A673 (cell line): ENCODE measurements at regions of chr16 and their contacts with region 1.

Region 1: GRCh38 chr16:89490387-89491237 is at the start of gene ANKRD11:
- DNase-seq: peak; percentile 100
- H3K4me3 ChIP-seq: peak within 1 kb of the TSS; percentile 86
- H3K27ac ChIP-seq: peak within 1 kb of the TSS; percentile 96
- H3K4me1 ChIP-seq: peaks cover 30% of the 10 kb centered on the region
- H3K27me3 ChIP-seq: no peaks in the 10 kb centered on the region
- CTCF ChIP-seq: no peak
- total RNA-seq, gene ANKRD11: 217 and 248 TPM in 2 replicates

Region 2: DNA sequence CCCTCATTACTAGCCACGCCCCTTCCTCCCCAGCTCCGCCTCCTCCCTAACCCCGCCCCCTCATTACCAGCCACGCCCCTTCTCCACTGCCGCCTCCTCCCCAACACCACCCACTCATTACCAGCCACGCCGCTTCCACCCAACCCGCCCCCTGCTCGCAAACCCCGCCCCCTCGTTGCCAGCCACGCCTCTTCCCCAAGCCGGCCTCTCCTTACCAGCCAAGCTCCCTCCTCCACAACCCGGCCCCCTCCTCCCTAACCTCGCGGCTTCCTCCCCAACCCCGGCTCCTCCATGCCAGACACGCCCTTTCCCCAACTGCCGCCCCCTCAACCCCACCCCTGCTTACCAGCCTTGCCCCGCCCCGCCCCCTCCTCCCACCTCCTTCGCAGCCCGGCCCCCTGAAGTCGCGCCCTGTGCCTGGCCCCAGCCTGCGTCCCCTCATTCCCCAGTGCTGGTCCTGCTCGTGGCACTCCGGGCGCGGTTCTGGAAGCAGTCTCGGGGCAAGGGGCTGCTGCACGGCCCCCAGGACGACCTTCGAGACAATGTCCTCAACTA is 297.5 kb before region 1 on chr16:
- CTCF ChIA-PET with region 1: no interaction called
- POLR2A ChIA-PET with region 1: no interaction called
- intact Hi-C with region 1: loop called (anchors 5 kb)
- DNase-seq: peak; percentile 90
- H3K4me3 ChIP-seq: no peak overlapping the region
- H3K27ac ChIP-seq: no peak overlapping the region
- H3K4me1 ChIP-seq: peaks cover 7% of the 10 kb centered on the region
- H3K27me3 ChIP-seq: no peaks in the 10 kb centered on the region
- CTCF ChIP-seq: no peak

Region 3: GRCh38 chr16:89230255-89230654 is 260.4 kb before region 1 on chr16:
- CTCF ChIA-PET with region 1: no interaction called
- POLR2A ChIA-PET with region 1: no interaction called
- intact Hi-C with region 1: no loop called
- DNase-seq: no peak
- H3K4me3 ChIP-seq: no peak overlapping the region
- H3K27ac ChIP-seq: no peak overlapping the region
- H3K4me1 ChIP-seq: no peaks in the 10 kb centered on the region
- H3K27me3 ChIP-seq: no peaks in the 10 kb centered on the region
- CTCF ChIP-seq: no peak

Region 4: DNA sequence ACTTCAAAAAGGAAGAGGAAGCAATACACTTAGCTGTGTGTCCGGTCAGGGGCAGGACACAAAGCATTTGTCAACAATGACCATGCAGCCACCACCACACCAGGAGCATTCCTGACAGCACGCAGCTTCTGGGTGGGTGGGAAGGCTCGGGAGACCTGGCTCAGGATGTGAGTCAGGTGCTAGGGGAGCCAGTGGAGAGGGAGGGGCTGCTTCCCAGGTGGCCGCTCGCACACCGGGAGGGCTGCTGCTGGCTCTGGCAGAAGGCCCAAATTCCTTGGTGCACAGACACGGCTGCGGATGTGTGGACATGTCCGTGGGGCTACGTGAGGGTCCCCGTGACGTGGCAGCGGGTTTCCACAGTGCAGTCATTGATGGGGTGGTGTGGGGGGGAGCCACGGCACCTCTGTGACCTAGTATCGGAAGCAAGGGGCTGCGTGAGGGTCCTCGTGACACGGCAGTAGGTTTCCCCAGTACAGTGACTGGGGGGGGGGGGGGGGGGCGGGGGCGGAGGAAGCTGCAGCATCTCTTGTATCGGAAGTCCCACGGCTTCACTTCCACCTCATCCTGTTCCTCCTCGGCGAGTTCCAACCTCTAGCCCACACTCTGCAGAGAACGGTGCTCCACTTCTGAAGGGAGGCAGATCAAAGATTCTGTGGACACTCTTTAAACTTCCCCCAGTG is 160.3 kb before region 1 on chr16:
- CTCF ChIA-PET with region 1: no interaction called
- POLR2A ChIA-PET with region 1: no interaction called
- intact Hi-C with region 1: loop called (anchors 5 kb)
- DNase-seq: no peak
- H3K4me3 ChIP-seq: no peak overlapping the region
- H3K27ac ChIP-seq: peak overlapping the region; percentile 40
- H3K4me1 ChIP-seq: peaks cover 77% of the 10 kb centered on the region
- H3K27me3 ChIP-seq: no peaks in the 10 kb centered on the region
- CTCF ChIP-seq: no peak

Region 5: DNA sequence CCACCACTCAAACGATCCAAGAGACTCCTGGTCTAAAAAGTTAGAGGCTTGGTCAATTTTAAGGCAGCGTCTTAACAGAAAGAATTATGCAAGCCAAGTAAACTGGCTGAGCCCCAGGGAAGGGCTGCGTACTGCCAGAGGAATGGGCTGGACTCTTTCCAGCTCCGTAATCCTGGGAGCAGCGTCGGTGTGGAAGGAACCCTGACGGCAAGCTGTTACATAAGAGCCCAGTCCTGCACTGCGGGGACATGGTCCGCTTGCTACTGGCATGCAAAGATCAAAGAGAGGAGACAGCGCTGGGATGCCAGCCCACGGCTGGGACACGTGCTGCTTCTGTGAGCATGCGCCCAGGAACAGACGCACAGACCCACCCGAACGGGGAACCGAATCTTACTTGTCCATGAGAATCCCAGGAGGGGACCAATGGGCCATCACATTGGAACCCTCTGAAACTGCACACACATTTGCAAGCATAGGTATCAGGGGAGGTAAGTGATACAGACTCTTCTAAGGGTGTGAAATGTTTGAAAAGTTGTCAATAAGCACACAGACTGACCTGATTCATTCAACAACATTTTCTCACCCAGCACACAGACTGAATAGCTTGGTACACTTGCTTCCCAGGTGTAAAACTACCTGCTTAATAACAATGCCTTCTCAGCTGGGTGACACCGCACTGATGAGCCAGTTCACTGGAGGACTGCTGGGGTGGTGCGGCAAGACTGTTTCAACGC is 95.3 kb before region 1 on chr16:
- CTCF ChIA-PET with region 1: no interaction called
- POLR2A ChIA-PET with region 1: no interaction called
- intact Hi-C with region 1: loop called (anchors 5 kb)
- DNase-seq: peak; percentile 92
- H3K4me3 ChIP-seq: no peak overlapping the region
- H3K27ac ChIP-seq: no peak overlapping the region
- H3K4me1 ChIP-seq: peaks cover 16% of the 10 kb centered on the region
- H3K27me3 ChIP-seq: no peaks in the 10 kb centered on the region
- CTCF ChIP-seq: no peak